ENCODE measurements at regions of chr19 and their contacts with region 1.

Region 1: DNA sequence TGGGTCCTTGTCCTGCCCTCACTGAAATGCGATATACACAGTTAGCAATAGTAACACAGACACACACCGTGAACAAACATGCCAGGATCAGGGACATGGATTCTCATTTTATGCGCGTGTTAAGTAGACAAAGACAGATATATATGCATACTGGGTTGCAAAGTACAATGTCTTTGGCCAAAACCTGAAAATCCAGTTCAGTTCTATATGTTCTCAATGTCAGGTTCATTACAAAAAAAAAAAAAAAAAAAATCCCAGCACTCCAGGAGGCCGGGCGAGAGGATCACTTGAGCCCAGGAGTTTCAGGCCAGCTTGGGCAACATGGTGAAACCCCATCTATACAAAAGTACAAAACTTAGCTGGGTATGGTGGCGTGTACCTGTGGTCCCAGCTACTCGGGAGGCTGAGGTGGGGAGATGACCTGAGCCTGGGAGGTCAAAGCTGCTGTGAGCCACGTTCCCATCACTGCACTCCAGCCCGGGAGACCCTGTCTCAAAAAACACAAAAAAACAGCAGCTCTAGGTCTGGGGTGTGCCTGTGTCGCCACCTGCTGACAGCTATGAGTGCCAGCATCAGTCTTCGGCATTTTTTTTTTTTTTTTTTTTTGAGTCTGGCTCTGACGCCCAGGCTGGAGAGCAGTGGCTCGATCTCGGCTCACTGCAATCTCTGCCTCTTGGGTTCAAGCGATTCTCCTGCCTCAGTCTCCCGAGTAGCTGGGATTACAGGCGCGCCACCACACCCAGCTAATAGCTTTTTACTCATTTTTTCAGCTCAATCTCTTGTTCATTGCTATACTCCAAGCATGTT is 10.3 kb downstream of the AP2S1 start:
- DNase-seq: peak; percentile 23
- H3K4me3 ChIP-seq: no peak overlapping the region
- CTCF ChIP-seq: peak; percentile 74

Region 2: GRCh38 chr19:46404055-46404752 is 436.1 kb before region 1 on chr19:
- CTCF ChIA-PET with region 1: no interaction called
- POLR2A ChIA-PET with region 1: no interaction called
- DNase-seq: no peak
- H3K4me3 ChIP-seq: peak overlapping the region; percentile 43
- CTCF ChIP-seq: peak; percentile 54

Region 3: GRCh38 chr19:46704379-46705076 is 135.8 kb before region 1 on chr19:
- CTCF ChIA-PET with region 1: interaction called, 19 read pairs
- POLR2A ChIA-PET with region 1: no interaction called
- DNase-seq: no peak
- H3K4me3 ChIP-seq: no peak overlapping the region
- CTCF ChIP-seq: peak; percentile 91

Region 4: GRCh38 chr19:46746281-46747013 is 93.9 kb before region 1 on chr19 and contains the start of gene STRN4:
- CTCF ChIA-PET with region 1: interaction called, 278 read pairs
- POLR2A ChIA-PET with region 1: no interaction called
- DNase-seq: no peak
- H3K4me3 ChIP-seq: peak within 1 kb of the TSS; percentile 91
- CTCF ChIP-seq: no peak

Region 5: DNA sequence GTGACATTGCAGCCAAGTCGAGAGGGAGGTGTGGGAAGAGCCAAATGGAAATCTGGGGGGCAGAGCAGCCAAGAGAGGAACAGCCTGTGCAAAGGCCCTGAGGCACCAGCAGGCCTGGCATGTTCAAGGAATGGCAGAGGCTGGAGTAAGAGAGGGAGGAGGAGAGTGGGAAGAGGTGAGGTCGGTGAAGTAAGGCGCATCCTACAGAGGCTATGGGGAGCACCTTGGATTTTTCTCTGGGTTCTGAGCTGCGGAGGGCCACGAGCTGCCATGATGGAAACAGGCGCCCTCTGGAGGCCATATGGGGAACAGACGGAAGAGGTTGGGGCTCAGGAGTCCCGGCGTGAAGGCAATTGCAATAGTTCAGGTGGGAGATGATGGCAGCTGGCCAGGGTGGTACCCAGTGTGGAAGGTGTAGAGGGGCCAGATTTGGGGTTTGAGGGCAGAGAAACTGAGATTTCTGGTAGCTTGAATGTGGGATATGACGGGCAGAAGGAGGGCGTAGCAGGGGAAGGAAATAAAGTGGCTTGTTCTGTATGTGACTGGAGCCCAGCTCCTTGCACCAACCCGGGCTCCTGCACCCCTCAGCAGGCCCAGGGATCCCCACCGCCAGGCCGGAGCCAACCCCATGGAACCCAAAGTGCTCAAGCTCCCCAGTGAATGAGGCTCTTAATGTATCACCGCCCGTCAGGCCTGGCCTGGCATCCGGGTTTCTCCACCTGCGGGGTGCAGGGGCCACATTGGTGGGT is 73.6 kb before region 1 on chr19:
- CTCF ChIA-PET with region 1: interaction called, 31 read pairs
- POLR2A ChIA-PET with region 1: interaction called, 4 read pairs
- DNase-seq: no peak
- H3K4me3 ChIP-seq: no peak overlapping the region
- CTCF ChIP-seq: peak; percentile 75

Region 6: GRCh38 chr19:46788262-46788967 is 51.9 kb before region 1 on chr19 and contains the start of gene SLC1A5:
- CTCF ChIA-PET with region 1: interaction called, 25 read pairs
- POLR2A ChIA-PET with region 1: interaction called, 11 read pairs
- DNase-seq: peak; percentile 79
- H3K4me3 ChIP-seq: peak within 1 kb of the TSS; percentile 95
- CTCF ChIP-seq: no peak

Region 7: GRCh38 chr19:46850228-46851203 is 10.2 kb after region 1 on chr19 and contains the start of gene AP2S1:
- CTCF ChIA-PET with region 1: interaction called, 13 read pairs
- POLR2A ChIA-PET with region 1: interaction called, 3 read pairs
- DNase-seq: peak; percentile 95
- H3K4me3 ChIP-seq: peak within 1 kb of the TSS; percentile 96
- CTCF ChIP-seq: no peak